Sciatic nerve (tissue), 2 donors: ENCODE measurements at regions of chr3 and their contacts with region 1.

Region 1: GRCh38 chr3:100009276-100010086 is 104.8 kb downstream of the FILIP1L start:
- DNase-seq: no peak
- ATAC-seq: no peak

Region 2: DNA sequence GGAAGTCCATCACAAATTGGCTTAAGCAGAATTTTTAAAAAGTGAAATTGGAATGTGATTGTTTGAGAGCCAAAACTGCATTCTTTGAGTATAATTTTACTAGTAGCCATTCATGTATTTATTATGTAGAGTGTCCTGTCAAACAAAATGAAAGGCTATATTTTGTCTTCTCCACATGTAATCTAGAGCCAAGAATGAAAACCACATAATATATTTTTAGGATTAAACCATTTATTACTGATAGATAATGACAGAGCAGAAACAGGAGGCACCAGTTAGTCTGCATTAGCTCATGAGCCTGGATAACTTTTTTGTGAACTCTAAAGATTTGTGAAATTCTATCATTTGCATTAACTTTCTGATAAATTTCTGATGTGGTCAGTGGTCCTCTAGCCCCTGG is 25.3 kb before region 1 on chr3:
- intact Hi-C with region 1: loop called (anchors 1 kb)
- DNase-seq: no peak
- ATAC-seq: no peak